Activated CD4-positive, alpha-beta T cell treated with anti-CD3 and anti-CD28 coated beads for 36 hours (primary cell): ENCODE measurements at regions of chr7 and their contacts with region 1.

Region 1: GRCh38 chr7:130896898-130897514 is 163.0 kb upstream of the KLF14 start:
- DNase-seq: peak; percentile 87
- ATAC-seq: peak; percentile 56
- H3K4me3 Mint-ChIP-seq: peak overlapping the region; percentile 22
- H3K27ac Mint-ChIP-seq: peak overlapping the region; percentile 88
- H3K4me1 Mint-ChIP-seq: peaks cover 94% of the 10 kb centered on the region
- H3K27me3 Mint-ChIP-seq: no peaks in the 10 kb centered on the region

Region 2: GRCh38 chr7:130921391-130922180 is 24.6 kb after region 1 on chr7:
- CTCF ChIA-PET with region 1: interaction called, 15 read pairs
- POLR2A ChIA-PET with region 1: interaction called, 5 read pairs
- intact Hi-C with region 1: no loop called
- DNase-seq: no peak
- ATAC-seq: no peak
- H3K4me3 Mint-ChIP-seq: no peak overlapping the region
- H3K27ac Mint-ChIP-seq: peak overlapping the region; percentile 47
- H3K4me1 Mint-ChIP-seq: peaks cover 96% of the 10 kb centered on the region
- H3K27me3 Mint-ChIP-seq: no peaks in the 10 kb centered on the region

Region 3: GRCh38 chr7:130941322-130942210 is 44.6 kb after region 1 on chr7:
- CTCF ChIA-PET with region 1: interaction called, 44 read pairs
- POLR2A ChIA-PET with region 1: interaction called, 14 read pairs
- intact Hi-C with region 1: loop called in 1 of 2 experiments (anchors 10 kb)
- DNase-seq: peak; percentile 54
- ATAC-seq: peak; percentile 7
- H3K4me3 Mint-ChIP-seq: peak overlapping the region; percentile 67
- H3K27ac Mint-ChIP-seq: peak overlapping the region; percentile 88
- H3K4me1 Mint-ChIP-seq: peaks cover 90% of the 10 kb centered on the region
- H3K27me3 Mint-ChIP-seq: no peaks in the 10 kb centered on the region

Region 4: GRCh38 chr7:131007394-131008330 is 110.7 kb after region 1 on chr7:
- CTCF ChIA-PET with region 1: interaction called, 5 read pairs
- POLR2A ChIA-PET with region 1: no interaction called
- intact Hi-C with region 1: loop called in 1 of 2 experiments (anchors 1 kb)
- DNase-seq: peak; percentile 80
- ATAC-seq: peak; percentile 27
- H3K4me3 Mint-ChIP-seq: peak overlapping the region; percentile 68
- H3K27ac Mint-ChIP-seq: peak overlapping the region; percentile 96
- H3K4me1 Mint-ChIP-seq: peaks cover 90% of the 10 kb centered on the region
- H3K27me3 Mint-ChIP-seq: no peaks in the 10 kb centered on the region

Region 5: DNA sequence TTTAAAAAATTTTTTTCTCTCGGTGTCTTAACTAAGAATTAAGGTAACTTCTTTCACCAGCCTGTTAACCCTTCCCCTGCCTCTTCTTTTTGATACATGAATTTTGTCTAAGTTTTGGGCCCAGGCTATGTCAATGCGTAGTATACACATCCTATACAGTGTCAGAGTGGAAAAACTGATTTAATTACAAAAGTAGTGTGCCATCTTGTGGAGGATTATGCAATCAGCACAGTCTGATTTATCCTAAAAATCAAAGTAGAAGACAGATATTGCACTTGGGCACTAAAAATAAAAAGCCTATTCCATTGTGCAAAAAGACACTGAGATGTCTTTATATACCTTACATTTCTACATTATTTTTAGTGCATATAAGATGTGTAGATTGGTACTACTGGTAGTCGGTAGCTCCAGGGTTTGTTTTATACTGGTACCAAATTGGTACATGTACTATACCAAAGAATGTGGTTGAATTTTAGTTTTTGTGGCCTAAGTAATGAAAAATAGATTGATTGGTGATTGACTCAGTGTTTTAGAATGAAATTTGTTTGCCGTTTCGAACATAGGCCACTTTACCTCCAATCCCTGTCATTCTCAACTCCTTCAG is 527.3 kb after region 1 on chr7:
- CTCF ChIA-PET with region 1: no interaction called
- POLR2A ChIA-PET with region 1: no interaction called
- intact Hi-C with region 1: loop called in 1 of 2 experiments (anchors 5 kb)
- DNase-seq: no peak
- ATAC-seq: peak; percentile 92
- H3K4me3 Mint-ChIP-seq: no peak overlapping the region
- H3K27ac Mint-ChIP-seq: no peak overlapping the region
- H3K4me1 Mint-ChIP-seq: peaks cover 8% of the 10 kb centered on the region
- H3K27me3 Mint-ChIP-seq: no peaks in the 10 kb centered on the region